ENCODE measurements at regions of chr6 and their contacts with region 1.

Region 1: DNA sequence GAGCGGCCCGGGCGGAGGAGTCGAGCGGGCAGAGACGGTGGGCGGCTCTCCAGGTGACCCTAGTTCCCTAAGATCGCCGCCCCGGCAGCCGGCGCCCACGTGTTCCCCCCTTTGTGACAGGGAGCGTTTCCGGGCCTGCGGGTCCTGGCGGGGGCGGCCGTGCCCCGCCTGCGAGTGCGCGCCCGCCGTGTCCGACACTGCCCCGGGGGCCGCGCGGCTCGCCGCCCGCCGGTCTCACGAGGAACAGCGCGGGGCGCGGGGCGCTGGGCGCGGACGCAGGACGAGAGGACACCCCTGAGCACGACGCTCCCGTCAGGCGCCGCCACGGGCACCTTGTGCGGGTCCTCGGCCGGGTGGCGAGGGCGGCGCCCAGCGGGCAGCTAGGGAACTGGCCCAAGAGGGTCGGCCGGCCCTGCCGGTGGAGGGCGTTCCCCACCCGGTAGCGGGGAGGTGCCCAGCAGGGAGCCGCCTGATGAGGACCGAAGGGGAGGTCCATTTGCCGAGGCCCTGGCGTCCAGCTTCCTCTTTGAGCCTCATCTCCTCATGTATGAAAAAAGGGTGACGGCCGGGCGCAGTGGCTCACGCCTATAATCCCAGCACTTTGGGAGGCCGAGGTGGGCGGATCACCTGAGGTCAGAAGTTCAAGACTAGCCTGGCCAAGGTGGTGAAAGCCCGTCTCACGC is at the start of gene VARS1:
- DNase-seq: peak; percentile 75 to 92 (median 85)
- ATAC-seq: peak; percentile 96
- H3K4me3 ChIP-seq: peak within 1 kb of the TSS; percentile 76
- H3K4me3 Mint-ChIP-seq: peak within 1 kb of the TSS; percentile 85 to 99 (median 96)
- H3K27ac ChIP-seq: peak within 1 kb of the TSS; percentile 93
- H3K27ac Mint-ChIP-seq: peak within 1 kb of the TSS; percentile 80 to 99 (median 98)
- H3K4me1 ChIP-seq: peaks cover 24 to 32% of the 10 kb centered on the region in 2 donors
- H3K4me1 Mint-ChIP-seq: peaks cover 12 to 55% (median 36%) of the 10 kb centered on the region in 7 donors
- H3K27me3 ChIP-seq: no peaks in the 10 kb centered on the region
- H3K27me3 Mint-ChIP-seq: no peaks in the 10 kb centered on the region
- total RNA-seq, gene VARS1: 34.3 to 84.2 (median 53.2) TPM

Region 2: DNA sequence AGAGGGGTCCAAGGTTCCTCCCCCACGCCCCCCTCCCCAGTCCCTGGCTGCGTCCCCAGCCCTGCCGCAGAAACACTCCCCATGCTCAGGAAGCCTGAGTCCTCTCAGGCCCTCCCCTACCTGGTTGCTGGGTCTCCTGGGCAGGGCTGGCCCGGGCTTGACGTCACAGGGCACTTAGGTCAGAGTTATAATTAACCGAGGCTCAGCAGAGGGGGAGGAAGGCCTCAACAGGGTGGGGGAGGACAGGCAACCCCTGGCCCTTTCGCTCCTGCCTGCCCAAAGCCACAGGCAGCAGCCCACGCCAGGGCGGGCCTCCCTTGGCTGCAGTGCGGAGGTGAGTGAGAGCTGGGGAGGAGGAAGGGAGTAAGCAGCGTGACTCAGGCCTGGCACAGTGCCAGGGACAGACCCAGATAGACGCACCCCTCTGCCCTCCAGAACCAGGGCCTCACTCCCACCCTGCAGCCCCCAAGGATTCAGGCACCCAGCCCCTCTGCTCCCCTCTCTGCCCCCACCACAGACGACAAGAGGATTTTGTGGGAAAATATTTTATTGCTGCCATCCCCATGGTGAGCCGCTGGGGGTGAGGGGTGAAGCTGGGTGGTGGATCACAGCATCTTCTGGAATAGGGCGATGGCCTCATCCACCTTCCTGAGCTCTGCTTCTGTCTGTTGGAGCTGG is 18.6 kb before region 1 on chr6 and contains the start of gene VWA7:
- CTCF ChIA-PET with region 1: interaction called, 4 read pairs
- POLR2A ChIA-PET with region 1: interaction called, 4 read pairs
- intact Hi-C with region 1: loop called (anchors 1 kb)
- DNase-seq: peak in 5 of 9 donors; percentile 23 to 84 (median 32)
- ATAC-seq: peak; percentile 80
- H3K4me3 ChIP-seq: peak within 1 kb of the TSS; percentile 24
- H3K4me3 Mint-ChIP-seq: peak within 1 kb of the TSS in 3 of 10 donors; percentile 57 to 65 (median 63)
- H3K27ac ChIP-seq: no peak within 1 kb of the TSS
- H3K27ac Mint-ChIP-seq: peak within 1 kb of the TSS in 1 of 9 donors; percentile 83
- H3K4me1 ChIP-seq: peaks cover 27% of the 10 kb centered on the region in 2 donors
- H3K4me1 Mint-ChIP-seq: peaks cover 5 to 36% (median 33%) of the 10 kb centered on the region in 7 donors
- H3K27me3 ChIP-seq: no peaks in the 10 kb centered on the region
- H3K27me3 Mint-ChIP-seq: no peaks in the 10 kb centered on the region
- total RNA-seq, gene VWA7: 0.53 to 4.5 (median 1.1) TPM

Region 3: DNA sequence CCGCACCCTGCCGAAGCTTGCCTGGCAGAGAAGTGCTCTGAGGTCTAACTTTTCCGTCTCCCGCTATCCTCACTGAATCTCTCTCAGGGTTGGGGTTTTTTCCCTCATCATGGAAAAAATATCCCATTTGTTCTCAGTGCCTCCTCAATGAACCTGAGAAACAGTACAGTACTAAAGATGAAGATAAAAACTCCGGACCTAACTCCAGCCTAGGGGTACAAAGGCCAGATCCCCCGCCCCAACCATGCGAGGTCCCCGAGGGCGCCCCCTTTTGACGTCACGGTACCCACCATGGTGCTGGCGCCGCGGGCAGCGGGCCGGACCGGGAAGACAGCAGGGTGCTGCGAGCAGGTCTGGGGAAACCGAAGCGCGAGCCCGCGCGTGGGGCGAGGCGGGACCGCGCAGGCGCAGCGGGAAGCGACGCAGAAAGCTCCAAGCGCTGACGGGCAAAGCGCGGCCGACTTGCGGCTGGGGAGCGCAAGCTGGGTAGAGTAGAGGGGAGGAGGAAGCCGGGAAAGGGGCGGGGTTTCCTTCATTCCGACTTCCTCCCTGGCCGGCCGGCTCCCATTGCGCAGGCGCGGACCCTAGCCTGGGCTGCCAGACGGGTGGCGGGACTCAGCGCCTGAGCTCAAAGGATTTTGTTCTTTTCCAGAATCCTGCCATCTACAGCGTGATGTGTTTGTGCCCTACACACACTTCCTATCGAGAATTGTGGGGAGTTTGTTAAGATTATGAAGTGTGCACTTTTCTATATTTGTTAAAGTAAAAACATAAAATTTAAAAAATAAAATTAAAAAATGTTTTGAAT is 10.9 kb after region 1 on chr6 and contains the start of gene LSM2:
- CTCF ChIA-PET with region 1: interaction called, 11 read pairs
- POLR2A ChIA-PET with region 1: interaction called, 30 read pairs
- intact Hi-C with region 1: loop called (anchors 1 kb)
- DNase-seq: peak; percentile 96 to 98 (median 98)
- ATAC-seq: peak; percentile 100
- H3K4me3 ChIP-seq: peak within 1 kb of the TSS; percentile 92
- H3K4me3 Mint-ChIP-seq: peak within 1 kb of the TSS; percentile 86 to 95 (median 92)
- H3K27ac ChIP-seq: peak within 1 kb of the TSS; percentile 89
- H3K27ac Mint-ChIP-seq: peak within 1 kb of the TSS; percentile 88 to 97 (median 93)
- H3K4me1 ChIP-seq: peaks cover 9 to 14% of the 10 kb centered on the region in 2 donors
- H3K4me1 Mint-ChIP-seq: peaks cover 16 to 47% (median 30%) of the 10 kb centered on the region in 7 donors
- H3K27me3 ChIP-seq: no peaks in the 10 kb centered on the region
- H3K27me3 Mint-ChIP-seq: no peaks in the 10 kb centered on the region
- total RNA-seq, gene LSM2: 22.9 to 94.5 (median 29.2) TPM

Region 4: GRCh38 chr6:31815025-31815838 is 19.5 kb after region 1 on chr6 and contains the starts of genes HSPA1A and HSPA1L:
- CTCF ChIA-PET with region 1: interaction called, 8 read pairs
- POLR2A ChIA-PET with region 1: interaction called, 11 read pairs
- intact Hi-C with region 1: loop called (anchors 2 kb)
- DNase-seq: peak in 6 of 9 donors; percentile 32 to 81 (median 42)
- ATAC-seq: peak; percentile 43
- H3K4me3 ChIP-seq: peak within 1 kb of the TSS; percentile 68
- H3K4me3 Mint-ChIP-seq: peak within 1 kb of the TSS; percentile 85 to 96 (median 94)
- H3K27ac ChIP-seq: peak within 1 kb of the TSS; percentile 78
- H3K27ac Mint-ChIP-seq: peak within 1 kb of the TSS; percentile 86 to 93 (median 90)
- H3K4me1 ChIP-seq: peaks cover 21 to 30% of the 10 kb centered on the region in 2 donors
- H3K4me1 Mint-ChIP-seq: peaks cover 7 to 44% (median 39%) of the 10 kb centered on the region in 7 donors
- H3K27me3 ChIP-seq: no peaks in the 10 kb centered on the region
- H3K27me3 Mint-ChIP-seq: no peaks in the 10 kb centered on the region
- total RNA-seq, gene HSPA1A: 6.7 to 125 (median 30.3) TPM
- total RNA-seq, gene HSPA1L: 3.3 to 5.5 (median 4.7) TPM

Region 5: GRCh38 chr6:31827286-31828079 is 31.7 kb after region 1 on chr6 and contains the start of gene HSPA1B:
- CTCF ChIA-PET with region 1: interaction called, 7 read pairs
- POLR2A ChIA-PET with region 1: interaction called, 9 read pairs
- intact Hi-C with region 1: loop called (anchors 1 to 5 kb)
- DNase-seq: peak; percentile 55 to 96 (median 82)
- ATAC-seq: peak; percentile 80
- H3K4me3 ChIP-seq: peak within 1 kb of the TSS; percentile 74
- H3K4me3 Mint-ChIP-seq: peak within 1 kb of the TSS; percentile 85 to 97 (median 90)
- H3K27ac ChIP-seq: peak within 1 kb of the TSS; percentile 72
- H3K27ac Mint-ChIP-seq: peak within 1 kb of the TSS; percentile 93 to 99 (median 97)
- H3K4me1 ChIP-seq: peaks cover 12 to 17% of the 10 kb centered on the region in 2 donors
- H3K4me1 Mint-ChIP-seq: peaks cover 11 to 51% (median 46%) of the 10 kb centered on the region in 7 donors
- H3K27me3 ChIP-seq: no peaks in the 10 kb centered on the region
- H3K27me3 Mint-ChIP-seq: no peaks in the 10 kb centered on the region
- total RNA-seq, gene HSPA1B: 8.6 to 68.9 (median 28.9) TPM

Region 6: DNA sequence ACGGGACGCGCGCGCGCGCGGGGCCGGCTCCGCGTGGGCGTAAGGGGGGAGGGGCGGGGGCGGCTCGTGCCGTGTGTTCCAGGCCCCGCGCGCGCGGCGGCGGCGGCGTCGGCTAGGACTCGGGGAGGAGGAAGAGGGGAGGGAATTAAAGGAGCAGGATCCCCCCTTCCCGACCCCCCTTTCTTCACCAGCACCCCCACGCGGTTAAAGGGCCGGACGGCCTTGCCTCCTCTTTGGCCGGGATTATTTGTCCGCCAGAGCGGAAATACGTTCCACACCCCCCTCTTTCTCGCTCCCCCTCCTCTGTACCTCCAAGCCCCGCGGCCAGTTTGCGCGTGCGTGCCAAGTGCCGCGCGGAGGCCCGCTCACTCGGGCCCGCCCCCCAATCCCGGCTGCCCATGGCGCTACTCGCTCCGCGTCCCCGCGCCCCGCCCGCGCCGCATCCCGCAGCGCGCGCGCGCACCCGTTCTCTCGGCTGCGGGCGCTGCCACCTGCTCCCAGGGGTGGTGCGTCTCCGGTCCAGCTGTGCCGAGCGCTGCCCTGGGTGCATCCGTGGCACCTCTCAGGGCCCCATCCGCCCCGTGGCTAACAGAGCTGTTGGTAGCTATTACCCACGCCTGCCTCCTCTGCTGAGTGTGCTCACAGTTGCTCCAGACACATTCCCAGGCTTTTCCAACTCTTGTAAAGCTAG is 106.3 kb after region 1 on chr6 and contains the start of gene ZBTB12:
- CTCF ChIA-PET with region 1: no interaction called
- POLR2A ChIA-PET with region 1: interaction called, 3 read pairs
- intact Hi-C with region 1: loop called in 1 of 2 experiments (anchors 5 kb)
- DNase-seq: peak; percentile 76 to 90 (median 84)
- ATAC-seq: peak; percentile 76
- H3K4me3 ChIP-seq: peak within 1 kb of the TSS; percentile 80
- H3K4me3 Mint-ChIP-seq: peak within 1 kb of the TSS; percentile 81 to 96 (median 88)
- H3K27ac ChIP-seq: peak within 1 kb of the TSS; percentile 83
- H3K27ac Mint-ChIP-seq: peak within 1 kb of the TSS; percentile 75 to 94 (median 86)
- H3K4me1 ChIP-seq: peaks cover 12 to 16% of the 10 kb centered on the region in 2 donors
- H3K4me1 Mint-ChIP-seq: peaks cover 18 to 34% (median 32%) of the 10 kb centered on the region in 7 donors
- H3K27me3 ChIP-seq: no peaks in the 10 kb centered on the region
- H3K27me3 Mint-ChIP-seq: peaks cover 0 to 11% (median 0%) of the 10 kb centered on the region in 5 donors
- total RNA-seq, gene ZBTB12: 0.77 to 4.5 (median 2.5) TPM

Measured in naive thymus-derived CD4-positive, alpha-beta T cell (primary cell).